CD4-positive, alpha-beta memory T cell (primary cell): ENCODE measurements at regions of chr16 and their contacts with region 1.

Region 1: GRCh38 chr16:19555162-19555937 is at the start of gene VPS35L:
- DNase-seq: peak; percentile 95 to 98 (median 96)
- H3K4me3 ChIP-seq: peak within 1 kb of the TSS; percentile 87 to 98
- H3K4me3 Mint-ChIP-seq: peak within 1 kb of the TSS; percentile 94 to 98 (median 97)
- H3K27ac ChIP-seq: peak within 1 kb of the TSS; percentile 72
- H3K27ac Mint-ChIP-seq: peak within 1 kb of the TSS; percentile 93 to 98 (median 96)
- H3K4me1 ChIP-seq: peaks cover 12% of the 10 kb centered on the region
- H3K4me1 Mint-ChIP-seq: peaks cover 13 to 36% (median 22%) of the 10 kb centered on the region in 4 donors
- H3K27me3 ChIP-seq: no peaks in the 10 kb centered on the region
- H3K27me3 Mint-ChIP-seq: no peaks in the 10 kb centered on the region
- total RNA-seq, gene VPS35L: 42.2 to 45.7 TPM

Region 2: GRCh38 chr16:17921355-17921953 is 1633.9 kb before region 1 on chr16:
- CTCF ChIA-PET with region 1: no interaction called
- POLR2A ChIA-PET with region 1: no interaction called
- intact Hi-C with region 1: no loop called
- DNase-seq: peak; percentile 22 to 42 (median 28)
- H3K4me3 ChIP-seq: no peak overlapping the region
- H3K4me3 Mint-ChIP-seq: no peak overlapping the region
- H3K27ac ChIP-seq: no peak overlapping the region
- H3K27ac Mint-ChIP-seq: no peak overlapping the region
- H3K4me1 ChIP-seq: no peaks in the 10 kb centered on the region
- H3K4me1 Mint-ChIP-seq: no peaks in the 10 kb centered on the region
- H3K27me3 ChIP-seq: no peaks in the 10 kb centered on the region
- H3K27me3 Mint-ChIP-seq: peaks cover 10 to 14% of the 10 kb centered on the region in 2 donors

Region 3: GRCh38 chr16:18789850-18790724 is 765.3 kb before region 1 on chr16 and contains the start of gene RPS15A:
- CTCF ChIA-PET with region 1: interaction called, 3 read pairs
- POLR2A ChIA-PET with region 1: interaction called, 6 read pairs
- intact Hi-C with region 1: loop called (anchors 1 kb)
- DNase-seq: peak; percentile 90 to 98 (median 95)
- H3K4me3 ChIP-seq: peak within 1 kb of the TSS; percentile 77 to 98
- H3K4me3 Mint-ChIP-seq: peak within 1 kb of the TSS; percentile 91 to 98 (median 96)
- H3K27ac ChIP-seq: peak within 1 kb of the TSS; percentile 80
- H3K27ac Mint-ChIP-seq: peak within 1 kb of the TSS; percentile 93 to 97 (median 96)
- H3K4me1 ChIP-seq: peaks cover 43% of the 10 kb centered on the region
- H3K4me1 Mint-ChIP-seq: peaks cover 36 to 53% (median 46%) of the 10 kb centered on the region in 4 donors
- H3K27me3 ChIP-seq: no peaks in the 10 kb centered on the region
- H3K27me3 Mint-ChIP-seq: no peaks in the 10 kb centered on the region
- total RNA-seq, gene RPS15A: 3,088 to 3,151 TPM

Region 4: GRCh38 chr16:19086322-19087199 is 468.8 kb before region 1 on chr16:
- CTCF ChIA-PET with region 1: interaction called, 10 read pairs
- POLR2A ChIA-PET with region 1: no interaction called
- intact Hi-C with region 1: no loop called
- DNase-seq: peak; percentile 54 to 78 (median 67)
- H3K4me3 ChIP-seq: peak overlapping the region in 1 of 2 donors; percentile 17
- H3K4me3 Mint-ChIP-seq: peak overlapping the region; percentile 17 to 81 (median 50)
- H3K27ac ChIP-seq: no peak overlapping the region
- H3K27ac Mint-ChIP-seq: no peak overlapping the region
- H3K4me1 ChIP-seq: peaks cover 11% of the 10 kb centered on the region
- H3K4me1 Mint-ChIP-seq: peaks cover 0 to 2% (median 0%) of the 10 kb centered on the region in 4 donors
- H3K27me3 ChIP-seq: no peaks in the 10 kb centered on the region
- H3K27me3 Mint-ChIP-seq: peaks cover 1 to 3% of the 10 kb centered on the region in 2 donors

Region 5: DNA sequence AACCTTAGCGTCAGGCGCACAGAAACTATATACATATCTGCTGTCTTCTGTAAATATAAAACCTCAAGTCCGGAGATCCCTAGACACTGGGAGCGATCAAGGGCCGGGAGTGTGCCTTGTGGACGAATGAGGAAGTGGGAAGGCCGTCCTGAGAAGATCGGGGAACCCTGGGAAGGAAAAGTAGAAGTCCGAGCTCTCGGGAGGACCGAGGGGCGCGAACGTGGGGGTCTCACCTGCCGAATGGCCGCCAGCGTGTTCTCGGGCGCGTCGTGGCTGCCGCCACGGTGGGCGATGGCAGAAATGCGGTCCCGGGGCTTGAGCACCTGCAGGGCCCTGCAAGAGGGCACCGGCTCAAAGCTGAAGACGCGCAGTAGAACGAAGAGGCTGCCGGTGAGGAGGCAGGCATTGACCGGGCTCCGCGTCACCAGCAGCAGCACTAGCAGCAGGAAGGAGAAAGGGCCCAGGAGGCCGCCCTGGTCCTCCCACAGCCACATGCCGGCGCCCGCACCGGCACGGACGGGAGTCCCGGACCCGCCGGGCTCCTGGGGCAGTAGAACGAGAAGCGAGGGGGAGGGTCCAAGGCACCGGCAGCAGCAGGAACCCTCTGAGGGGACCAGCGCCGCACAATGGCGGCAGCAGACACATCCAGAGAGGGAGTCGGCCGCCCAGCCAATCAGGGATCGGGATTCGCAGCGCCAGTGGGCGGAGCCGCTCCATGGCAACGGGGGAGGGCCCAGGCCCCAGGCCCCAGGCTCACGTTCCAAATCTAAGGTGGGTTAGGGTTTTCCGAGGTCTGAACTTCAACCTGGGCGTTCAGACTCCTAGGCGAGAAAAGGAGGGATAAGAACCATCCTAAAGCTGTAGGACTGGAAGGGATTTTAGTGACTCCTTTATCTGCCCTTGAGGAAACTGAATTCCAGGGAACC is 33.6 kb before region 1 on chr16 and contains the start of gene GDE1:
- CTCF ChIA-PET with region 1: interaction called, 58 read pairs
- POLR2A ChIA-PET with region 1: interaction called, 66 read pairs
- intact Hi-C with region 1: loop called (anchors 1 kb)
- DNase-seq: peak; percentile 88 to 93 (median 89)
- H3K4me3 ChIP-seq: peak within 1 kb of the TSS; percentile 87 to 89
- H3K4me3 Mint-ChIP-seq: peak within 1 kb of the TSS; percentile 95 to 99 (median 96)
- H3K27ac ChIP-seq: peak within 1 kb of the TSS; percentile 78
- H3K27ac Mint-ChIP-seq: peak within 1 kb of the TSS; percentile 73 to 98 (median 95)
- H3K4me1 ChIP-seq: peaks cover 70% of the 10 kb centered on the region
- H3K4me1 Mint-ChIP-seq: peaks cover 45 to 74% (median 55%) of the 10 kb centered on the region in 4 donors
- H3K27me3 ChIP-seq: no peaks in the 10 kb centered on the region
- H3K27me3 Mint-ChIP-seq: no peaks in the 10 kb centered on the region
- total RNA-seq, gene GDE1: 23.2 to 23.3 TPM

Region 6: GRCh38 chr16:19542138-19542821 is 13.1 kb before region 1 on chr16:
- CTCF ChIA-PET with region 1: interaction called, 10 read pairs
- POLR2A ChIA-PET with region 1: interaction called, 9 read pairs
- intact Hi-C with region 1: no loop called
- DNase-seq: no peak
- H3K4me3 ChIP-seq: no peak overlapping the region
- H3K4me3 Mint-ChIP-seq: no peak overlapping the region
- H3K27ac ChIP-seq: no peak overlapping the region
- H3K27ac Mint-ChIP-seq: no peak overlapping the region
- H3K4me1 ChIP-seq: no peaks in the 10 kb centered on the region
- H3K4me1 Mint-ChIP-seq: peaks cover 0 to 5% (median 0%) of the 10 kb centered on the region in 4 donors
- H3K27me3 ChIP-seq: no peaks in the 10 kb centered on the region
- H3K27me3 Mint-ChIP-seq: no peaks in the 10 kb centered on the region

Region 7: GRCh38 chr16:19717771-19718602 is 162.6 kb after region 1 on chr16 and contains the starts of genes IQCK and KNOP1:
- CTCF ChIA-PET with region 1: interaction called, 9 read pairs
- POLR2A ChIA-PET with region 1: interaction called, 6 read pairs
- intact Hi-C with region 1: loop called (anchors 1 kb)
- DNase-seq: peak; percentile 88 to 91 (median 90)
- H3K4me3 ChIP-seq: peak within 1 kb of the TSS; percentile 93 to 96
- H3K4me3 Mint-ChIP-seq: peak within 1 kb of the TSS; percentile 92 to 95 (median 94)
- H3K27ac ChIP-seq: peak within 1 kb of the TSS; percentile 67
- H3K27ac Mint-ChIP-seq: peak within 1 kb of the TSS; percentile 84 to 95 (median 88)
- H3K4me1 ChIP-seq: peaks cover 25% of the 10 kb centered on the region
- H3K4me1 Mint-ChIP-seq: peaks cover 17 to 46% (median 34%) of the 10 kb centered on the region in 4 donors
- H3K27me3 ChIP-seq: no peaks in the 10 kb centered on the region
- H3K27me3 Mint-ChIP-seq: no peaks in the 10 kb centered on the region
- total RNA-seq, gene IQCK: 1.7 to 3.1 TPM
- total RNA-seq, gene KNOP1: 15.3 to 16.6 TPM

Region 8: GRCh38 chr16:20300312-20301097 is 745.2 kb after region 1 on chr16:
- CTCF ChIA-PET with region 1: interaction called, 3 read pairs
- POLR2A ChIA-PET with region 1: no interaction called
- intact Hi-C with region 1: loop called (anchors 5 kb)
- DNase-seq: peak in 4 of 5 donors; percentile 1 to 4 (median 2)
- H3K4me3 ChIP-seq: no peak overlapping the region
- H3K4me3 Mint-ChIP-seq: no peak overlapping the region
- H3K27ac ChIP-seq: no peak overlapping the region
- H3K27ac Mint-ChIP-seq: no peak overlapping the region
- H3K4me1 ChIP-seq: no peaks in the 10 kb centered on the region
- H3K4me1 Mint-ChIP-seq: peaks cover 0 to 4% (median 1%) of the 10 kb centered on the region in 4 donors
- H3K27me3 ChIP-seq: no peaks in the 10 kb centered on the region
- H3K27me3 Mint-ChIP-seq: peaks cover 4 to 6% of the 10 kb centered on the region in 2 donors